ENCODE measurements at regions of chr2 and their contacts with region 1.

Region 1: GRCh38 chr2:65227425-65228262 is at the start of gene ACTR2:
- DNase-seq: peak; percentile 95
- H3K4me3 Mint-ChIP-seq: peak within 1 kb of the TSS; percentile 98
- H3K27ac Mint-ChIP-seq: peak within 1 kb of the TSS; percentile 96
- H3K4me1 Mint-ChIP-seq: peaks cover 27% of the 10 kb centered on the region
- H3K27me3 Mint-ChIP-seq: no peaks in the 10 kb centered on the region
- total RNA-seq, gene ACTR2: 339 and 350 TPM in 2 replicates

Region 2: GRCh38 chr2:63849381-63850203 is 1378.1 kb before region 1 on chr2:
- intact Hi-C with region 1: loop called (anchors 10 kb)
- DNase-seq: no peak
- H3K4me3 Mint-ChIP-seq: no peak overlapping the region
- H3K27ac Mint-ChIP-seq: no peak overlapping the region
- H3K4me1 Mint-ChIP-seq: peaks cover 76% of the 10 kb centered on the region
- H3K27me3 Mint-ChIP-seq: no peaks in the 10 kb centered on the region

Region 3: GRCh38 chr2:65129826-65130663 is 97.6 kb before region 1 on chr2 and contains the start of gene RAB1A:
- intact Hi-C with region 1: loop called (anchors 1 kb)
- DNase-seq: peak; percentile 98
- H3K4me3 Mint-ChIP-seq: peak within 1 kb of the TSS; percentile 100
- H3K27ac Mint-ChIP-seq: peak within 1 kb of the TSS; percentile 100
- H3K4me1 Mint-ChIP-seq: peaks cover 35% of the 10 kb centered on the region
- H3K27me3 Mint-ChIP-seq: peaks cover 6% of the 10 kb centered on the region
- total RNA-seq, gene RAB1A: 88.1 and 96.6 TPM in 2 replicates

Measured in activated T-helper 2 cell treated with anti-CD3 and anti-CD28 coated beads, Interferon-gamma antibody, Interleukin-2, Interleukin-4, amounts not matched to agents 10 μg/mL and 5 μg/mL and 100 μg/mL, durations not matched to agents 14 hours and 24 hours and 36 hours (primary cell).